ENCODE measurements at regions of chr5 and their contacts with region 1.

Region 1: GRCh38 chr5:134873987-134874830 is at the start of gene TXNDC15:
- DNase-seq: peak; percentile 66 to 87 (median 78)
- ATAC-seq: peak; percentile 95
- H3K4me3 Mint-ChIP-seq: peak within 1 kb of the TSS; percentile 89 to 97 (median 94)
- H3K27ac Mint-ChIP-seq: peak within 1 kb of the TSS; percentile 92 to 97 (median 96)
- H3K4me1 Mint-ChIP-seq: peaks cover 24 to 48% (median 40%) of the 10 kb centered on the region in 4 donors
- H3K27me3 Mint-ChIP-seq: no peaks in the 10 kb centered on the region
- polyA plus RNA-seq, gene TXNDC15: 8.7 to 12.2 (median 9.1) TPM

Region 2: DNA sequence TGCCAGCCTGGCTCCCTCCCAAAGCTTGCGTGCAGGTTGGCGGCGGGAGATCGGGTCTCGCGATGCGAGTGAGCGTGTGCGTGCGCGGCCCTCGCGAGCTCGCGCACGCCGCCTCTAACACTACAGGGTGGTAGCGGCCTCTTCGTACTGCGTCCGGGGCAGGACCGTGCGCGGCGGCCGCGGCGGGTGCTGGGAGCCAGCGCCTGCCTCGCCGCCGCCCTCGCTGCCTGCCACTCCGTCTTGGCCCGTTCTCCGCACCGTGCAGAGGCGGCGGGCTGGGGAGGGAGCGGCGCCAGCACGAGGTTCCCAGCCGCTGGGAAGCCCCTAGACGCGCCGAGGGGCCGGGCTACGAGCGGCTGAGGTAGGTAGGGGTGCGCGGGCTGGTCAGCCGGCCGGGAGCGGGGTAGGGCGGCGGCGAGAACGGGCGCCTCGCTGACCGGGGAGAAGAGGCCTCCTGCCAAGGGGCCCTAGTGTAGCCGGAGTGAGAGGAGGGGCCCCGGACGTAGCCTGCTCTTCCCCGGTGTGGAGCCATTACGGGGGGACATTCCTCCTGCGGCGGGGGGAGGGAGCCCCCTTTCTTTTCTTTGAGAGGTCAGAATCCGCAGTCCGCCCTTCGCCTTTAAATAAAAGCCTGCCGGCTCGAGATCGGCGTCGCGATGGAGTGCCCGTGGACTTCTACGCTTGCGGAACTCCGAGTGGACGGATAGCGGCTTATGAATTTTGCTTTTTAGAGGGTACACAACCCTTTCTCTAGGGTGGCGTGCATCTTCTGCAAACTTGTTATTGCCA is 28.2 kb before region 1 on chr5 and contains the start of gene C5orf24:
- POLR2A ChIA-PET with region 1: interaction called, 29 read pairs
- DNase-seq: peak; percentile 82 to 95 (median 89)
- ATAC-seq: peak; percentile 90
- H3K4me3 Mint-ChIP-seq: peak within 1 kb of the TSS; percentile 86 to 95 (median 90)
- H3K27ac Mint-ChIP-seq: peak within 1 kb of the TSS; percentile 90 to 97 (median 96)
- H3K4me1 Mint-ChIP-seq: peaks cover 13 to 42% (median 34%) of the 10 kb centered on the region in 4 donors
- H3K27me3 Mint-ChIP-seq: no peaks in the 10 kb centered on the region
- polyA plus RNA-seq, gene C5orf24: 6.6 to 9.4 (median 9.2) TPM

Region 3: GRCh38 chr5:134948911-134949310 is 74.7 kb after region 1 on chr5:
- POLR2A ChIA-PET with region 1: no interaction called
- DNase-seq: no peak
- ATAC-seq: no peak
- H3K4me3 Mint-ChIP-seq: no peak overlapping the region
- H3K27ac Mint-ChIP-seq: peak overlapping the region in 1 of 10 donors; percentile 21
- H3K4me1 Mint-ChIP-seq: no peaks in the 10 kb centered on the region
- H3K27me3 Mint-ChIP-seq: no peaks in the 10 kb centered on the region

Region 4: DNA sequence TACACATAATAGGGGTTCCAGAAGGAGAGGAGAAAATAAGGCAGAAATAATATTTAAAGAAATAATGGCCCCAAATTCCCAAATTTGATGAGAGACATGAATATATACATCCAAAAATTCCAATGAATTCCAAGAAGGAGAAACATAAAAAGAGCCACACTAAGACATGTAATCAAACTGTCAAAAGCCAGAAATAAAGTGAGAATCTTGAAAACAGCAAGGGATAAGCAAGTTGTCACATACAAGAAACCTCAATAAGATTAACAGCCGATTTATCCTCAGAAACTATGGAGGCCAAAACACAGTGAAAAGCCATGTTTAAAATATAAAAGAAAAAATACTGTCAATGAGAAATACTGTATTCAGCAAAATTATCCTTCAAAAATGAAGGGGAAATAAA is 108.0 kb after region 1 on chr5:
- POLR2A ChIA-PET with region 1: no interaction called
- DNase-seq: no peak
- ATAC-seq: no peak
- H3K4me3 Mint-ChIP-seq: no peak overlapping the region
- H3K27ac Mint-ChIP-seq: no peak overlapping the region
- H3K4me1 Mint-ChIP-seq: no peaks in the 10 kb centered on the region
- H3K27me3 Mint-ChIP-seq: peaks cover 0 to 22% (median 0%) of the 10 kb centered on the region in 5 donors

Measured in naive thymus-derived CD8-positive, alpha-beta T cell (primary cell).